HCT116 (cell line): ENCODE measurements at regions of chr7 and their contacts with region 1.

Region 1: GRCh38 chr7:11427686-11428273 is 404.2 kb downstream of the THSD7A start:
- DNase-seq: peak; percentile 53
- ATAC-seq: peak; percentile 73
- H3K4me3 ChIP-seq: no peak overlapping the region
- H3K27ac ChIP-seq: no peak overlapping the region
- H3K4me1 ChIP-seq: no peaks in the 10 kb centered on the region
- H3K27me3 ChIP-seq: no peaks in the 10 kb centered on the region
- CTCF ChIP-seq: peak; percentile 57 to 78 (median 71)
- POLR2A ChIP-seq: no peak
- RAD21 ChIP-seq: peak; percentile 82

Region 2: GRCh38 chr7:11104578-11104977 is 323.2 kb before region 1 on chr7:
- CTCF ChIA-PET with region 1: no interaction called
- POLR2A ChIA-PET with region 1: no interaction called
- RAD21 ChIA-PET with region 1: no interaction called
- intact Hi-C with region 1: no loop called
- DNase-seq: no peak
- ATAC-seq: no peak
- H3K4me3 ChIP-seq: no peak overlapping the region
- H3K27ac ChIP-seq: no peak overlapping the region
- H3K4me1 ChIP-seq: no peaks in the 10 kb centered on the region
- H3K27me3 ChIP-seq: no peaks in the 10 kb centered on the region
- CTCF ChIP-seq: no peak
- POLR2A ChIP-seq: no peak
- RAD21 ChIP-seq: no peak

Region 3: DNA sequence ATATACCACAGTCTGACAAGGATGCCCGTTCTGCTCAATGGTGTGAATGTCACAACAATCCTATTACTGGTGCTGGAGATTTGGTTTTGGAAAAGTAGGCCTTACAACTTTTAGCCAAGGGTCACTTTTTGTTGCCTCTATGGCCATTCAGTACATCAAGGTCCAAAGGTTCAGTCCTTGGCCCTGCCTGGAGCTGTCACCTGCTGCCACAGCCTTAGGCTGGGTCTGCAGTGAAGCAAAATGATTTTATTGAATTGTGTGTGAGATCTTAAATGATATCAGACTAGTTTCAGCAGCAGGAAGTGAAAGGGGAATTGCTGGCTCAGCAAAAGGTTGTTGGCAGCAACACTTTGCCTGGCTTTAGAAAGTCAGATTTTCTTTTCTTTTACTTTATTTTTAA is 23.4 kb before region 1 on chr7:
- CTCF ChIA-PET with region 1: no interaction called
- POLR2A ChIA-PET with region 1: no interaction called
- RAD21 ChIA-PET with region 1: no interaction called
- intact Hi-C with region 1: no loop called
- DNase-seq: no peak
- ATAC-seq: no peak
- H3K4me3 ChIP-seq: no peak overlapping the region
- H3K27ac ChIP-seq: no peak overlapping the region
- H3K4me1 ChIP-seq: no peaks in the 10 kb centered on the region
- H3K27me3 ChIP-seq: no peaks in the 10 kb centered on the region
- CTCF ChIP-seq: no peak
- POLR2A ChIP-seq: no peak
- RAD21 ChIP-seq: no peak

Region 4: GRCh38 chr7:11831736-11832495 is 404.1 kb after region 1 on chr7 and contains the start of gene THSD7A:
- CTCF ChIA-PET with region 1: interaction called, 4 read pairs
- POLR2A ChIA-PET with region 1: no interaction called
- RAD21 ChIA-PET with region 1: no interaction called
- intact Hi-C with region 1: loop called (anchors 2 kb)
- DNase-seq: no peak
- ATAC-seq: peak; percentile 90
- H3K4me3 ChIP-seq: peak within 1 kb of the TSS; percentile 50 to 71
- H3K27ac ChIP-seq: no peak within 1 kb of the TSS
- H3K4me1 ChIP-seq: peaks cover 0 to 15% of the 10 kb centered on the region in 2 experiments; a peak in 1 of 4 replicates
- H3K27me3 ChIP-seq: no peaks in the 10 kb centered on the region
- CTCF ChIP-seq: peak in 1 of 3 experiments; percentile 13; a peak in 1 of 6 replicates
- POLR2A ChIP-seq: no peak
- RAD21 ChIP-seq: peak; percentile 19
- total RNA-seq, gene THSD7A: 0.05 TPM

Region 5: GRCh38 chr7:12067141-12067831 is 639.5 kb after region 1 on chr7:
- CTCF ChIA-PET with region 1: no interaction called
- POLR2A ChIA-PET with region 1: no interaction called
- RAD21 ChIA-PET with region 1: no interaction called
- intact Hi-C with region 1: loop called (anchors 1 kb)
- DNase-seq: peak; percentile 58
- ATAC-seq: peak; percentile 71
- H3K4me3 ChIP-seq: peak overlapping the region in 1 of 2 experiments; percentile 20; a peak in 1 of 4 replicates
- H3K27ac ChIP-seq: no peak overlapping the region
- H3K4me1 ChIP-seq: peaks cover 0 to 31% of the 10 kb centered on the region in 2 experiments; a peak in 2 of 4 replicates
- H3K27me3 ChIP-seq: no peaks in the 10 kb centered on the region
- CTCF ChIP-seq: peak; percentile 65 to 74 (median 68)
- POLR2A ChIP-seq: no peak
- RAD21 ChIP-seq: peak; percentile 89